ENCODE measurements at regions of chr6 and their contacts with region 1.

Region 1: GRCh38 chr6:110389689-110390382 is 25.5 kb downstream of the DDO start:
- DNase-seq: no peak
- H3K4me3 ChIP-seq: no peak overlapping the region
- H3K27ac ChIP-seq: no peak overlapping the region
- H3K4me1 ChIP-seq: no peaks in the 10 kb centered on the region
- H3K27me3 ChIP-seq: no peaks in the 10 kb centered on the region
- CTCF ChIP-seq: no peak

Region 2: GRCh38 chr6:109705258-109705657 is 684.6 kb before region 1 on chr6:
- intact Hi-C with region 1: loop called (anchors 5 kb)
- DNase-seq: peak; percentile 84
- H3K4me3 ChIP-seq: no peak overlapping the region
- H3K27ac ChIP-seq: no peak overlapping the region
- H3K4me1 ChIP-seq: no peaks in the 10 kb centered on the region
- H3K27me3 ChIP-seq: no peaks in the 10 kb centered on the region
- CTCF ChIP-seq: peak; percentile 93

Region 3: GRCh38 chr6:110179401-110180227 is 210.2 kb before region 1 on chr6 and contains the start of gene WASF1:
- intact Hi-C with region 1: loop called (anchors 5 kb)
- DNase-seq: peak; percentile 96
- H3K4me3 ChIP-seq: peak within 1 kb of the TSS; percentile 74
- H3K27ac ChIP-seq: peak within 1 kb of the TSS; percentile 60
- H3K4me1 ChIP-seq: peaks cover 8% of the 10 kb centered on the region
- H3K27me3 ChIP-seq: no peaks in the 10 kb centered on the region
- CTCF ChIP-seq: no peak
- total RNA-seq, gene WASF1: 2.2 to 4.8 TPM